Activated CD8-positive, alpha-beta T cell treated with anti-CD3 and anti-CD28 coated beads, Interleukin-2, amount 10 ng/mL, durations not matched to agents 7 days and 5 days (primary cell): ENCODE measurements at regions of chr1 and their contacts with region 1.

Region 1: GRCh38 chr1:89987170-89987819 is 7.6 kb upstream of the ZNF326 start:
- DNase-seq: peak; percentile 73
- ATAC-seq: peak; percentile 88
- H3K4me3 Mint-ChIP-seq: no peak overlapping the region
- H3K27ac Mint-ChIP-seq: no peak overlapping the region
- H3K4me1 Mint-ChIP-seq: no peaks in the 10 kb centered on the region
- H3K27me3 Mint-ChIP-seq: peaks cover 19% of the 10 kb centered on the region

Region 2: GRCh38 chr1:89780721-89781120 is 206.6 kb before region 1 on chr1:
- CTCF ChIA-PET with region 1: interaction called, 63 read pairs
- POLR2A ChIA-PET with region 1: no interaction called
- DNase-seq: no peak
- ATAC-seq: peak; percentile 74
- H3K4me3 Mint-ChIP-seq: no peak overlapping the region
- H3K27ac Mint-ChIP-seq: peak overlapping the region; percentile 43
- H3K4me1 Mint-ChIP-seq: peaks cover 25% of the 10 kb centered on the region
- H3K27me3 Mint-ChIP-seq: no peaks in the 10 kb centered on the region

Region 3: DNA sequence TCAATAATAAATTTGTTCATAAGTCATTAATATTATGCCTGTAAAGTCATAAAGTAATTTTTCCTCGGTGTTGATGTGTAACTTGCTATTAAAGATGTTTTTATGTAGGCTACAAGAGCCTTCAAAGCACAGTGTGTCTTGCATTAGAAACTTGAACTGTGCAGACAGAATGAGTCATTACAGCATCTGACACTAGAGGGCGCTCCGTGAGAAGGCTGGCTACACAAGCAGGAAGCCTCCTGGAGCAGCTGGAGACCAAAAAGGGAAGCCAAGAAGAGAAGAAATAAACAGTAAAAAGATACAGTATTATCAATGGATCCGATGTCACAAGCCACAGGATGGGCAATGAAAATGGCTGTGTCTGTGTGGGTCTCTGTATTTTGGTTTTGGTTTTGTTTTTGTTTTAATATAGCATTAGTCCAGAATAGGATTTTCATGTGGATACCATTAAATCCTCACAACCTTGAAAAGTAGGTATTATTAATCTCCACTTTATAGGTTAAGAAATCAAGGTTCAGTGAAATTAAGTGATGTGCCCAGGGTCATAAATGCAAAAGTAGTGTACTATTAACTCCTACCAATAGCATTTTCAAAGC is 182.6 kb before region 1 on chr1:
- CTCF ChIA-PET with region 1: interaction called, 12 read pairs
- POLR2A ChIA-PET with region 1: no interaction called
- DNase-seq: peak; percentile 92
- ATAC-seq: peak; percentile 93
- H3K4me3 Mint-ChIP-seq: no peak overlapping the region
- H3K27ac Mint-ChIP-seq: no peak overlapping the region
- H3K4me1 Mint-ChIP-seq: peaks cover 3% of the 10 kb centered on the region
- H3K27me3 Mint-ChIP-seq: peaks cover 4% of the 10 kb centered on the region

Region 4: DNA sequence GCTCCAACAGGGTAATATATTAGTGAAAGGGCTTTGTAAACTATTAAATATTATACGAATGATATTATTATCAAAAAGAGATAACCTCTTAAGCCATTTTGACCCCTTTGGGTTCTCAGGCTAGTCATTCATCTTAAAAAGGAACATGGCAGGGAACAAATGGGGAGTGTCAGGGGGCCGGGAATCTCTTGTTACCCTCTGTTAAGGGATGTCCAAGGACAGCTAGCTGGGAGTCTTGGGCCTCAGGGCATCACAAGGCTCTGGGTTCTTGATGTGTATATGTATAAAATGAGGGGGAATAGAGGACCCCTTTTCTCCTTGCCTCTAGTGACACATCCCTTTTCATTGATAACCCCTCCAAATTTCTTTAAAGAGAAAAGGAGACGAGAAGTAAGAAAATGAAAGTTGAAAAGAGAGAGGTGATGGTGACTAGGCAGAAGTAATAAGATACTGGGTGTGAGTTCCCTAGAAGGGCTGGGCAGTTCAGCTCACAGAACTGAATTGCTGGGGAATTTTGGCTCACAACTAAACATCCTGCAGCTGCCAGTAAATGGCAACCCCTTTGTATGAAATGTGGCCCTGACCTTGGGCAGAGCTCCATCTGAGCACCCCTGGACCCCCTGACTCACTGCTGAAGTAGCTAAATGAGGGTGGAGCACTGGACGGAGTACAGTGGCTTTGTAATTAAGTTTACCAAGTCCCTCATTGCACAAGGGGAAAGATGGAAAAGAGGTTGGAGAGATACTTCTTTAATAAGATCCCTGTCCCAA is 12.4 kb before region 1 on chr1:
- CTCF ChIA-PET with region 1: interaction called, 28 read pairs
- POLR2A ChIA-PET with region 1: no interaction called
- DNase-seq: no peak
- ATAC-seq: no peak
- H3K4me3 Mint-ChIP-seq: no peak overlapping the region
- H3K27ac Mint-ChIP-seq: no peak overlapping the region
- H3K4me1 Mint-ChIP-seq: peaks cover 4% of the 10 kb centered on the region
- H3K27me3 Mint-ChIP-seq: peaks cover 4% of the 10 kb centered on the region